ENCODE measurements at regions of chr1 and their contacts with region 1.

Region 1: GRCh38 chr1:155172732-155173477 is at the start of gene KRTCAP2:
- DNase-seq: peak; percentile 94 to 96
- ATAC-seq: peak; percentile 85 to 92 (median 90)
- H3K4me3 ChIP-seq: peak within 1 kb of the TSS; percentile 63 to 95 (median 78)
- H3K27ac ChIP-seq: peak within 1 kb of the TSS; percentile 72 to 98 (median 94)
- H3K4me1 ChIP-seq: peaks cover 5 to 47% (median 24%) of the 10 kb centered on the region in 9 donors
- H3K27me3 ChIP-seq: peaks cover 7 to 28% (median 19%) of the 10 kb centered on the region in 7 donors
- CTCF ChIP-seq: peak; percentile 93 to 98 (median 95)
- total RNA-seq, gene KRTCAP2: 96.1 to 173 (median 114) TPM

Region 2: DNA sequence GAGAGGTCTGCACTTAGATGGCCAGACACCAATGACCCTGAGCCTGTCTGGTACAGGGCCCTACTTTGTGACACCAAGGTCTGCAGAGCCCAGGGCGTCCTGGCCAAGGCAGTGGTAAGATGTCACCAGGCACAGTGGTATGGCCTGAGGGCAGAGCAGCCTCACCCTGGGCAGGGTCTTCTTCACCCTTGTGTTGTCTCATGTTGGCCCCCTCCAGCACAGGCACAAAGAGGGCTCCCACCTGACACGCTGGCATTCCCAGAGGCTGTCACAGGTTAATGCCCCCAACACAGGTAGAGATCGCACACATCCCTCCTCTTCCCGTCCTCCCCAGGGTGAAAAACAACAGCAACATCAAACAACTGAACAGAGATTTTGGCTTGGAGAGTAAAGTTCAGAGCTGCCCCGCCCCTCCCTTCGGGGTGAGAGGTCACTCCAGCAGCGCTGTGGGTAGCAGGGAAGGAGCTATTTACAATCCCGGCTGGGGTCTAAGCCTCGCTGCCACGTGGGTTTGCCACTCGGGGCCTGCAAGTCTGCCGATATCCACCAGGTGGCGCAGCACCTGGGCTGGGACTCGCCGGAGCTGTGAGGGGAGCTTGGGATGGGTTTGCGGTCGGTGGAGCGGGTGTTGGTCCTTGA is 81.7 kb before region 1 on chr1:
- intact Hi-C with region 1: loop called in 3 of 10 experiments (anchors 1 to 2 kb)
- DNase-seq: peak; percentile 79 to 84
- ATAC-seq: peak; percentile 37 to 74 (median 62)
- H3K4me3 ChIP-seq: no peak overlapping the region
- H3K27ac ChIP-seq: no peak overlapping the region
- H3K4me1 ChIP-seq: peaks cover 0 to 33% (median 22%) of the 10 kb centered on the region in 9 donors
- H3K27me3 ChIP-seq: no peaks in the 10 kb centered on the region
- CTCF ChIP-seq: peak; percentile 94 to 99 (median 99)

Region 3: DNA sequence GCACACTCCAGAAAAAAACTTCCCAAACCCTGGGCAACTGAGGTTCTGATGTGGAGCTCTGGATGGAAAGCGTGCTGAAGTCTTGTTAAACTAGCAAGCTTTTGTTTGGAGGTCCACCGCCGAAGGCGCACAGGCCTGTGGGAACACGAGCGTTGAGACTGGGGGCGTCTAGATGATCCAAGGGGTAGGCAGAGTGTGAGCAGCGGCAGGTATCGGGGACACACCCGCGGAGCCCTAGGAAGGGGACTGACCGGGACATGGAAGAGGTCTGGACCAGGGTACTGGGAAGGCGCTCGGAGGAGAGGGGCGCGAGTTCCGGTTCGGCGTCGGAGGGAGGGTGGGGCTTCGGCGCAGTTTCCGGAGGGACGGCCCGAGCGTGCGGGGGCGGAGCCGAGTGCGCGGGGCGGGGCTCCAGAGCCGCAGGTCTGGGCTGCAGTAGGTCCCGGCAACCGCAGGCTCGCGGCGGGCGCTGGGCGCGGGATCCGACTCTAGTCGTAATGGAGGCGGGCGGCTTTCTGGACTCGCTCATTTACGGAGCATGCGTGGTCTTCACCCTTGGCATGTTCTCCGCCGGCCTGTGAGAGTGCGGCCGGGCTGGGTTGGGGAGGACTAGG is 37.4 kb before region 1 on chr1 and contains the start of gene SLC50A1:
- intact Hi-C with region 1: loop called in 1 of 10 experiments (anchors 5 kb)
- DNase-seq: peak; percentile 94 to 95
- ATAC-seq: peak; percentile 89 to 95 (median 94)
- H3K4me3 ChIP-seq: peak within 1 kb of the TSS; percentile 29 to 76 (median 66)
- H3K27ac ChIP-seq: peak within 1 kb of the TSS; percentile 82 to 100 (median 98)
- H3K4me1 ChIP-seq: peaks cover 14 to 90% (median 76%) of the 10 kb centered on the region in 9 donors
- H3K27me3 ChIP-seq: no peaks in the 10 kb centered on the region
- CTCF ChIP-seq: peak in 7 of 9 donors; percentile 20 to 64 (median 41)
- total RNA-seq, gene SLC50A1: 5.5 to 16.8 (median 7.9) TPM

Region 4: GRCh38 chr1:155219592-155220031 is 46.7 kb after region 1 on chr1:
- intact Hi-C with region 1: loop called in 2 of 10 experiments (anchors 5 to 10 kb)
- DNase-seq: no peak
- ATAC-seq: peak in 4 of 8 donors; percentile 17 to 34 (median 27)
- H3K4me3 ChIP-seq: peak overlapping the region in 1 of 10 donors; percentile 30
- H3K27ac ChIP-seq: peak overlapping the region in 1 of 10 donors; percentile 48
- H3K4me1 ChIP-seq: peaks cover 0 to 60% (median 3%) of the 10 kb centered on the region in 9 donors
- H3K27me3 ChIP-seq: no peaks in the 10 kb centered on the region
- CTCF ChIP-seq: no peak

Region 5: GRCh38 chr1:155227261-155228095 is 54.6 kb after region 1 on chr1:
- intact Hi-C with region 1: loop called in 6 of 10 experiments (anchors 1 to 10 kb)
- DNase-seq: peak; percentile 96 to 99
- ATAC-seq: peak; percentile 97 to 99 (median 98)
- H3K4me3 ChIP-seq: peak overlapping the region; percentile 32 to 73 (median 62)
- H3K27ac ChIP-seq: peak overlapping the region; percentile 42 to 91 (median 88)
- H3K4me1 ChIP-seq: peaks cover 6 to 54% (median 21%) of the 10 kb centered on the region in 9 donors
- H3K27me3 ChIP-seq: no peaks in the 10 kb centered on the region
- CTCF ChIP-seq: peak in 1 of 9 donors; percentile 10